Heart left ventricle (tissue), 16 donors: ENCODE measurements at regions of chr4 and their contacts with region 1.

Region 1: DNA sequence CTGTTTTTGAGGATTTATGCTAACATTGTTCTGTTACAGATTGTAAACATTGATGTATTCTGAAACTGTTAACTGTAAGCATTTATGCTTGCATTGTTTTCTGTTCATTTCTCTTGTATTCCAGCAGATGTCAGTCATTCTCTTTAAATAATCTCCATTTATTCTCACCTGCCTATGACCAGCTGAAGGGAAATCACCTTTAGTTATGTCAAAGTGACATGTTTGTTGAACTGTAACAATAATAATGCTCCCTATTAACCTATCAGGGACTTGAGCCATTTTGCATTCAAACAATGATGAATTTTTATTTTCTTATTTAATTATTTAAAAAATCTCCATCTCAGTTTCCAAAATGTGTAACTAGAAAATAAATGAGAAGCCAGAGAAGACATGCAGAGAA is 58.0 kb downstream of the SPCS3 start:
- DNase-seq: no peak
- ATAC-seq: peak in 1 of 4 donors; percentile 27
- H3K4me3 ChIP-seq: no peak overlapping the region
- H3K27ac ChIP-seq: no peak overlapping the region
- H3K4me1 ChIP-seq: no peaks in the 10 kb centered on the region
- H3K27me3 ChIP-seq: no peaks in the 10 kb centered on the region
- CTCF ChIP-seq: peak; percentile 22 to 62 (median 50)
- POLR2A ChIP-seq: no peak

Region 2: GRCh38 chr4:175469508-175469907 is 908.3 kb before region 1 on chr4:
- intact Hi-C with region 1: no loop called
- DNase-seq: no peak
- ATAC-seq: no peak
- H3K4me3 ChIP-seq: no peak overlapping the region
- H3K27ac ChIP-seq: no peak overlapping the region
- H3K4me1 ChIP-seq: no peaks in the 10 kb centered on the region
- H3K27me3 ChIP-seq: no peaks in the 10 kb centered on the region
- CTCF ChIP-seq: no peak
- POLR2A ChIP-seq: no peak

Region 3: GRCh38 chr4:176780990-176781738 is 403.4 kb after region 1 on chr4:
- intact Hi-C with region 1: loop called in 2 of 10 experiments (anchors 5 kb)
- DNase-seq: no peak
- ATAC-seq: peak in 1 of 4 donors; percentile 18
- H3K4me3 ChIP-seq: peak overlapping the region in 3 of 12 donors; percentile 2 to 19 (median 12)
- H3K27ac ChIP-seq: peak overlapping the region in 11 of 12 donors; percentile 4 to 58 (median 49)
- H3K4me1 ChIP-seq: peaks cover 0 to 24% (median 3%) of the 10 kb centered on the region in 12 donors
- H3K27me3 ChIP-seq: no peaks in the 10 kb centered on the region
- CTCF ChIP-seq: no peak
- POLR2A ChIP-seq: no peak

Region 4: DNA sequence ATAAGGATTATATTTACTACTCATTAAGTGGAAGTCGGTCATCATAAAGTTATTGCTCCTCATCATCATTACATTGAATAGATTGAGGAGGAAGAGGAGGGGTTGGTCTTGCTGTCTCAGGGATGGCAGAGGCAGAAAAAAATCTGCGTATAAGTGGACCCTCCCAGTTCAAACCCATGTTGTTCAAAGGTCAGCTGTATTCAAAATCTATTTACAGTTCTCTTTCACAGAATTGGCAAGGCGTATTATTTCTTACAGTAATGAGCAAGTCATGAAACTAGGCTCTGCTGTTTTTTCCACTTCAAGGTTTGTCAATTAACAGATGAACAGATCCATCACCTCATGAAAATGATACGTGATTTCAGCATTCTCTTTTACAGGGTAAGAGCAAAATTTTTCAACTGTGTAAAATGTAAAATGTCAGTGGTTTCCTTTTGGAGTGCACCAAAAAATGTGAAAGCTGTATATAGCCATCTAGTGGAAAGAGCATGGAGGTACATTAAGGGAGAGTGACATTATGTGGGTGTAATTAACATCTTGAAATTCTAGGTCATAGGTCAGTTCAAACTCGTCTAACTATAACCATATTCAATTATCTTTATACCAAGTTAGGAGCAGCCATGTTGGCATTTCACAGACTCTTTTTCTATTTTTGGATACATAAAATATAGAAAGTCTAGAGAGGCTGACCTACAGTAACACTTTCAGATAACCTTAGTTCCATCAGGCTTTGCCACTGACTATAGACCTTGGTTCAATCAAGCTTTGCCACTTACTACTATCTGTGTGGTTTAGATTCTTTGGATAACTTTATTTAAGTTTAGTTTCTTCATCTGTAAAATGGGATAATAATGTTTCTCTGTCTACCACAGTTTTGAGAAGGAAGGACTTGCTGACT is 961.9 kb after region 1 on chr4:
- intact Hi-C with region 1: loop called in 3 of 10 experiments (anchors 5 to 10 kb)
- DNase-seq: no peak
- ATAC-seq: peak in 3 of 4 donors; percentile 37 to 66 (median 56)
- H3K4me3 ChIP-seq: no peak overlapping the region
- H3K27ac ChIP-seq: no peak overlapping the region
- H3K4me1 ChIP-seq: peaks cover 0 to 5% (median 0%) of the 10 kb centered on the region in 12 donors
- H3K27me3 ChIP-seq: no peaks in the 10 kb centered on the region
- CTCF ChIP-seq: peak; percentile 42 to 68 (median 56)
- POLR2A ChIP-seq: no peak